HepG2 (cell line): ENCODE measurements at regions of chr14 and their contacts with region 1.

Region 1: DNA sequence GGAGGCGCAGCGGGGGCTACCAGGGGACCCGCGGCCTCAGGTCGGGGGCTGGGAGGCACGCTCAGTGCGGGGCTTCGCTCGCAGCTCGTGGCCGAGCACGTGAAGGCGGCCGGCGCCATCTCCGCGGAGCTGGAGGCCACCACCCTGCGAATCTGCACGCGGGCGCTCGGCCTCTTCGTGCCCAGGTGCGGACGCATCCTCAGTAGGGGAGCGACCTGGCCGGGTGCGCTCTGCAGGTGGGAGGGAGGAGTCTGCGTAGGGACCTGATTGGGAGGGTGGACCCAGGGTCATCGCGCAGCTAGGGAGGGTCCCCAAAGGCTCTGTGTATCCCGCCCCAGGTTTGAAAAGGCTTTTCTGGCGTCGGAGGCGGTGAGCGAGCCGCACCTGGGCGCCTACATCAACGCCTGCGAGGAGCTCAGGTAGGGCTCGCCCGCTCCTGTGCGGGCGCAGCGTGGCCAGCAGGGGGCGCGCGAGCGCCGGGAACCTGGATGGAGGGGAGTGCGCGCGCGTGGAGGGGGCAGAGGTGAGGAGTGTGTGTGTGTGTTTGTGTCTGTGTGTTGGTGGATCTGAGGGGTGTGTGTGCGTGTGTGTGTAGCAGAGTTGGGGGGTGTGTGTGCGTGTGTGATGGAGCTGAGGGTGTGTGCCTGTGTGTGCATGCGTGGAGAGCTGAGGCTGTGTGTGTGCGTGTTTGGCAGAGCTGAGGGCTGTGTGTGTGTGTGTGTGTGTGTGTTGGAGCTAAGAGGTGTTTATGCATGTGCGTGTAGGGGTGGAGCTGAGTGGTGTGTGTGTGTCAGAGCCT is 10.3 kb downstream of the EXOC3L4 start:
- DNase-seq: no peak
- ATAC-seq: peak; percentile 54
- H3K4me3 ChIP-seq: peak overlapping the region; percentile 43 to 71 (median 61)
- H3K27ac ChIP-seq: peak overlapping the region; percentile 76
- H3K4me1 ChIP-seq: peaks cover 87% of the 10 kb centered on the region
- H3K27me3 ChIP-seq: no peaks in the 10 kb centered on the region
- CTCF ChIP-seq: peak; percentile 99
- EP300 ChIP-seq: no peak
- POLR2A ChIP-seq: peak in 1 of 2 experiments; percentile 47; a peak in 1 of 4 replicates
- RAD21 ChIP-seq: peak; percentile 92

Region 2: GRCh38 chr14:103078093-103078749 is 26.6 kb before region 1 on chr14:
- CTCF ChIA-PET with region 1: interaction called, 8 read pairs
- POLR2A ChIA-PET with region 1: interaction called, 26 read pairs
- in situ Hi-C with region 1: no loop called
- intact Hi-C with region 1: no loop called
- DNase-seq: peak; percentile 73
- ATAC-seq: peak; percentile 34
- H3K4me3 ChIP-seq: no peak overlapping the region
- H3K27ac ChIP-seq: no peak overlapping the region
- H3K4me1 ChIP-seq: peaks cover 37% of the 10 kb centered on the region
- H3K27me3 ChIP-seq: peaks cover 2 to 33% of the 10 kb centered on the region in 2 experiments; a peak in 3 of 5 replicates
- CTCF ChIP-seq: peak; percentile 92
- EP300 ChIP-seq: no peak
- POLR2A ChIP-seq: no peak
- RAD21 ChIP-seq: peak; percentile 57; the same call in 1 of the 2 replicates

Region 3: GRCh38 chr14:103091041-103091882 is 13.6 kb before region 1 on chr14:
- CTCF ChIA-PET with region 1: no interaction called
- POLR2A ChIA-PET with region 1: interaction called, 39 read pairs
- in situ Hi-C with region 1: no loop called
- intact Hi-C with region 1: no loop called
- DNase-seq: no peak
- ATAC-seq: peak; percentile 12
- H3K4me3 ChIP-seq: peak overlapping the region in 2 of 3 experiments; percentile 3 to 40; a peak in 1 of 6 replicates
- H3K27ac ChIP-seq: no peak overlapping the region
- H3K4me1 ChIP-seq: peaks cover 89% of the 10 kb centered on the region
- H3K27me3 ChIP-seq: peaks cover 0 to 8% of the 10 kb centered on the region in 2 experiments; a peak in 3 of 5 replicates
- CTCF ChIP-seq: peak; percentile 66
- EP300 ChIP-seq: no peak
- POLR2A ChIP-seq: no peak
- RAD21 ChIP-seq: peak; percentile 41; the same call in 1 of the 2 replicates

Region 4: GRCh38 chr14:103185051-103185992 is 80.5 kb after region 1 on chr14:
- CTCF ChIA-PET with region 1: interaction called, 3 read pairs
- POLR2A ChIA-PET with region 1: interaction called, 5 read pairs
- in situ Hi-C with region 1: no loop called
- intact Hi-C with region 1: loop called (anchors 5 kb)
- DNase-seq: peak; percentile 27
- ATAC-seq: no peak
- H3K4me3 ChIP-seq: no peak overlapping the region
- H3K27ac ChIP-seq: no peak overlapping the region
- H3K4me1 ChIP-seq: peaks cover 35% of the 10 kb centered on the region
- H3K27me3 ChIP-seq: no peaks in the 10 kb centered on the region
- CTCF ChIP-seq: peak; percentile 46
- EP300 ChIP-seq: no peak
- POLR2A ChIP-seq: no peak
- RAD21 ChIP-seq: no peak

Region 5: GRCh38 chr14:103232831-103233319 is 128.0 kb after region 1 on chr14:
- CTCF ChIA-PET with region 1: no interaction called
- POLR2A ChIA-PET with region 1: no interaction called
- in situ Hi-C with region 1: no loop called
- intact Hi-C with region 1: no loop called
- DNase-seq: no peak
- ATAC-seq: no peak
- H3K4me3 ChIP-seq: no peak overlapping the region
- H3K27ac ChIP-seq: no peak overlapping the region
- H3K4me1 ChIP-seq: peaks cover 13% of the 10 kb centered on the region; the same call in 1 of the 2 replicates
- H3K27me3 ChIP-seq: peaks cover 6 to 20% of the 10 kb centered on the region in 2 experiments
- CTCF ChIP-seq: no peak
- EP300 ChIP-seq: no peak
- POLR2A ChIP-seq: no peak
- RAD21 ChIP-seq: no peak